Left cardiac atrium (tissue), 4 donors: ENCODE measurements at regions of chr11 and their contacts with region 1.

Region 1: DNA sequence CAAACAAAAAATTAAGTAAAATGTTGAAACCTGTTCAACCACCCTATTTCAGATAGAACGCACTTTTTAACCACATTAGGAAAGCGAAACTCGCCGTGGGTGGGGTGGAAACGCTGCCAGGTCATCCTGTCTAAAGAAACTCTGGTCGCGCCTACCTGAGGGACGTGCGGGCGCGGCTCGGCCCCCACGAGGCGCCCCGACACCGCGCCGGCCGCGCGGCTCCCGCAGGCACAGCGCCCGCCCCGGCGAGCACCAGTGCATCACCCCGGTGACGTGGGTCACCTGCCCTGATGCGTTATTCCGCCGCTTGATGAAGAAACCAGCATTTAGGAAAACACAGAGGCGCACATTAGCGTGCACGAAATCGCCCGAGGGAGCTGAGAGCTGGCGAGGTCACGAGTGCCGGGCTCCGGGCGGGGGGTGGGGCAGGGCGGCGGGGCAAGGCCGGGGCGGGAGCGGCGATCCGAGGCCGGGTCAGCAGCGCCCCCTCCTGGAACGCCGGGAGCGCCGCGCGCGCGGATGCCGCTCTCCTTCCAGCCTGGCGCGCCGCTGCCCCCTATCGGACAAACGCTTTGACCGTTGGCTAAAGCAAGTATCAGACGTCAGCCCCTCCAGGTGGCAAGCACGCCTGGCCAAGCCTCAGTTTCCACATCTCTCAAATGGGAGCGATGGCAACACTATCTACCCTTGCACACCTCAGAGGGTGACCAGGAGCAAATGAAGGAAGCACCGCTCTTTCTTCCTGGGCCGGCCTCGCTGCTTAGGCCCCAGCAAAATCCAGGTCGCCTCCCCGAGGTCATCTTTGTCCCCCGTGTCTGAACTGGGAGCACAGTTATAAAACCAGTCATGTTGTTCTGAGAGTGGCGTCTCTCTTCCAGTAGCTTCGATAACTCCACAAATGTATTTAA is 15.7 kb upstream of the SNX32 start:
- DNase-seq: peak; percentile 95
- ATAC-seq: peak; percentile 95 to 98

Region 2: GRCh38 chr11:65625628-65626342 is 192.3 kb before region 1 on chr11:
- intact Hi-C with region 1: loop called in 1 of 2 experiments (anchors 5 kb)
- DNase-seq: peak; percentile 65
- ATAC-seq: peak; percentile 71 to 78

Region 3: DNA sequence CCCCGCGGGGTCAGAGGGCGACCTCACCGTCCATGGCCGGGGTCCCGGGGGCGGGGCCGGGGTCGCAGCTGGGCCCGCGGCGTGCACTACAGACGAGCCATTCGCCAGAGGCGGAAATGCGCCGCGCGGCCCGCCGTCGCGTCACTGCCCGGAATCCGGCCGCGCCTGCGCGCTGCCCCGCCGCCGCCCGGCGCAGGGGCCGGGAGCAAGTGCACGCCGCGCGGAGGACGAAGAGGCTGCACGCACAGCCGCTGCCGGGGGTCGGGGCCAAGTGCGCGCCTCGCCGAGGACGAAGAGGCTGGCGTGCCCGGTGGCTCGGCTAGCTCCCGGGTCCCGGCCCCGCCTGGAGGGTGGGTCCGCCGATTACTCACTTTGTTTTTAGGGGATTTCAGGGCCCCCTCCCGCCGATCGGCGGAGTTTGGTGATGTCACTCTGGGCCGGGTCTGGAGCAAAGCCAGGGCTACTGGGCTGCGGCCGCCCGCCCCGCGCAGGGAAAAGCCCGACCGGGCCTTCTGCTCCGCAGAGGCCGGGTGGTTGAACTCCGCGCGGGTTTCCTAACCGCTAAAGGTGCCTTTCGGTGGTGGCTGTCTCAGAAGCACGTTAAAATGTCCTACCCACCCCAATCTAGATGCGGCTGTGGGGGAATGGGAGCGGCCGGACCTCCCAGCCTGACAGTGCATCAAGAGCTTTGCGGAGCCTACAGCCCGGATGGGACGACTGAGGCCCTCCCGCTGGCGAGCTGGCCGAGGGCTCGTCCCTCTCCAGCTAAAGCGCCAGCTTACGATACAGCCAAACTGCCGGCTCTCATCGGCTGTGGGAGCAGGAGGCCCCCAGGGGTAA is 155.1 kb before region 1 on chr11 and contains the start of gene RELA:
- intact Hi-C with region 1: no loop called
- DNase-seq: peak; percentile 95
- ATAC-seq: peak; percentile 89 to 91
- total RNA-seq, gene RELA: 36.1 to 56.2 TPM

Region 4: GRCh38 chr11:65700391-65700790 is 117.7 kb before region 1 on chr11:
- intact Hi-C with region 1: loop called in 1 of 2 experiments (anchors 10 kb)
- DNase-seq: no peak
- ATAC-seq: no peak

Region 5: GRCh38 chr11:65779851-65780577 is 38.1 kb before region 1 on chr11:
- intact Hi-C with region 1: loop called in 1 of 2 experiments (anchors 5 kb)
- DNase-seq: peak; percentile 83
- ATAC-seq: peak; percentile 83 to 89

Region 6: GRCh38 chr11:65945430-65945911 is 127.4 kb after region 1 on chr11 and contains the start of gene TSGA10IP:
- intact Hi-C with region 1: no loop called
- DNase-seq: no peak
- ATAC-seq: no peak
- total RNA-seq, gene TSGA10IP: not detected